ENCODE measurements at regions of chr6 and their contacts with region 1.

Region 1: GRCh38 chr6:129448965-129449364 is 261.0 kb downstream of the ARHGAP18 start:
- DNase-seq: no peak
- H3K4me3 Mint-ChIP-seq: peak overlapping the region; percentile 6
- H3K27ac Mint-ChIP-seq: no peak overlapping the region
- H3K4me1 Mint-ChIP-seq: peaks cover 74% of the 10 kb centered on the region
- H3K27me3 Mint-ChIP-seq: peaks cover 1% of the 10 kb centered on the region

Region 2: GRCh38 chr6:129432738-129433137 is 16.2 kb before region 1 on chr6:
- intact Hi-C with region 1: loop called (anchors 2 kb)
- DNase-seq: no peak
- H3K4me3 Mint-ChIP-seq: no peak overlapping the region
- H3K27ac Mint-ChIP-seq: no peak overlapping the region
- H3K4me1 Mint-ChIP-seq: no peaks in the 10 kb centered on the region
- H3K27me3 Mint-ChIP-seq: no peaks in the 10 kb centered on the region

Measured in activated T-helper 1 cell treated with anti-CD3 and anti-CD28 coated beads, Interleukin-12 subunit alpha, Interleukin-12 subunit beta, Interleukin-2, Interleukin-4 antibody, amounts not matched to agents 30 ng/mL and 10 ng/mL and 1 ng/mL, durations not matched to agents 14 hours and 24 hours and 36 hours (primary cell).